Breast epithelium (tissue), 4 donors: ENCODE measurements at regions of chr11 and their contacts with region 1.

Region 1: DNA sequence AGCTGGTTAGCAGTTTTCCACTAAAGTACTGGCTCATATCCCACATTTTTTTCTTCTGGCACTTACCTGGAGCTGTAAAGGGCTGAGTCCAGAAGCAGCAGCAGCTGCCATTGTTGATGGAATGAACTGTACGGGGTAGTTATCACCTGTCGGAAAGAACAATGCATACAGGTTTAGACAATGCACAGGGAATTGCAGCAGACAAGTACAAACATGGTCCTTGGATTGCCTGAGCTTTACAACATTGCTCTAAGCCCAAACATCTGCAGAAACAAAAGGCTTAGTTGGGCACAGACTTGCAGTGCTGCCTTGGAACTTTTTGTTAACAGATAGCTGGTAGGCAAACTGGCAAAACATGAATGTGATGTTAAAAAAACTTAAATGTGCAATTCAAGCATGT is 258.8 kb downstream of the SOX6 start:
- DNase-seq: no peak
- H3K4me3 ChIP-seq: no peak overlapping the region
- H3K27ac ChIP-seq: no peak overlapping the region
- H3K4me1 ChIP-seq: no peaks in the 10 kb centered on the region
- H3K27me3 ChIP-seq: no peaks in the 10 kb centered on the region
- CTCF ChIP-seq: no peak
- POLR2A ChIP-seq: no peak

Region 2: DNA sequence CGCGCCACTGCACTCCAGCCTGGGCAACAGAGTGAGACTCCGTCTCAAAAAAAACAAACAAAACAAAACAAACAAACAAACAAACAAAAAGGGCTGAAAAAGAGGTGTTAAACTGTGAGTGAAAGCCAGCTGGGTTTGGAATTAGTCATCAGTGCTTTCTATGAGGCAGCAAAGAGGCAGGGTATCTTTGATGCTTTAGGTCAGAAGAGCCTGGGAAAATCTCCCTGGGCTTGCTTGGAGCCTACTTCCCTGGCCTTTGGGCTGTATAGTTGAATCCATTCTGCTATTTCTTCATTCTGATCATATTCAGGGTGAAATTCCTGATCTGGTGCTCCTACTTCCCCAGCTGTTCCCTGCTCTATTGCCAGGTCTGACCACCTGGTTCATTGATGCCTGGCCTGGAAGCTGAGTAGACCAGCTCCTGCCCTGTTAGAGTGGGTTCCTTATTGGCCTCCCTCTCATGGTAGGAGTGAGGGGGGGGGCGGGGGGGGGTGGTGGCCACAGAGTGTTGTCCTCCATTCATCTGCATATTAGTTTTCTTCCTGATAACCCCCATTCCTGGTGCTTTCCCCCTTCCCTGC is 917.2 kb before region 1 on chr11:
- intact Hi-C with region 1: loop called (anchors 5 kb)
- DNase-seq: no peak
- H3K4me3 ChIP-seq: no peak overlapping the region
- H3K27ac ChIP-seq: no peak overlapping the region
- H3K4me1 ChIP-seq: no peaks in the 10 kb centered on the region
- H3K27me3 ChIP-seq: no peaks in the 10 kb centered on the region
- CTCF ChIP-seq: no peak
- POLR2A ChIP-seq: no peak

Region 3: GRCh38 chr11:15937601-15938120 is 159.9 kb before region 1 on chr11:
- intact Hi-C with region 1: no loop called
- DNase-seq: no peak
- H3K4me3 ChIP-seq: no peak overlapping the region
- H3K27ac ChIP-seq: no peak overlapping the region
- H3K4me1 ChIP-seq: no peaks in the 10 kb centered on the region
- H3K27me3 ChIP-seq: peaks cover 0 to 9% of the 10 kb centered on the region in 2 donors
- CTCF ChIP-seq: no peak
- POLR2A ChIP-seq: no peak

Region 4: GRCh38 chr11:15976433-15977045 is 121.0 kb before region 1 on chr11:
- intact Hi-C with region 1: no loop called
- DNase-seq: no peak
- H3K4me3 ChIP-seq: no peak overlapping the region
- H3K27ac ChIP-seq: peak overlapping the region in 1 of 2 donors; percentile 54
- H3K4me1 ChIP-seq: no peaks in the 10 kb centered on the region
- H3K27me3 ChIP-seq: no peaks in the 10 kb centered on the region
- CTCF ChIP-seq: no peak
- POLR2A ChIP-seq: no peak